ENCODE measurements at regions of chr17 and their contacts with region 1.

Region 1: DNA sequence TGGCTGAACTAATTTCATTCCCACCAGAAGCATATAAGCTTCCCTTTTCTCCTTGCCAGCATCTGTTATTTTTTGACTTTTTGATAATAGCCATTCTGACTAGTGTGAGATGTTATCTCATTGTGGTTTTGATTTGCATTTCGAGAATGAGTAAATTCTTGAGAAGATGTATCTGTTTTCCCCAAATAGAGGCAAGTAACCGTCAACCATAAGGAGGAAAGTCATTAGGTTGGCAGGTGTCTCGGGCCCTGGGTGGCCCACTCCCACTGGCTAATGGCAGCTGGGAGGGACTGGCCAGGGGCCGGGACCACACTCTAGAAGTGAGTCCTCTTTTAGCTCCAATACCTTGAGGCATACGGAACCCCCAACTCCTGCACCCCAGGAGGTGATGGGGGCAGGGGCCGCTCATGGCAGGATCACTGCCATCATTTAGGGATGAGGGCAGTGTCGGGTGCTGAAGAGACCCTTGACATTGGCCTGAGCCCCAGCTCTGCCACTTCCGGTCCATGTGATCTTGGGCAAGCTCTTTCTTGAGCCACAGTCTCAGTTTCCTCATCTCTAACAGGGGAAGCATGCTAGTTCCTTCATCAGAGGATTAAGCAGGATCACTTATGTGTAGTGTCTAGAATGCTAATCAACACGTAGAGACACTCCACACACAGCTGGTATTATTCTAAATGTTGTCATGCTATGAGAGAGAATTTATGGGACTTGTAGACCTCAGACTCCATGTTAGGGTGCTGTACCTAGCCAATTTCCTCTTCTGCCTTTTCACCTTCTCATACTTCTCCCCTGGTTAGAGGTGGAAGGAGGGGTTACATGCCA is 44.3 kb downstream of the RGS9 start:
- DNase-seq: peak; percentile 82
- H3K4me3 Mint-ChIP-seq: peak overlapping the region; percentile 16
- H3K27ac Mint-ChIP-seq: peak overlapping the region; percentile 90
- H3K4me1 Mint-ChIP-seq: peaks cover 68% of the 10 kb centered on the region
- H3K27me3 Mint-ChIP-seq: no peaks in the 10 kb centered on the region

Region 2: DNA sequence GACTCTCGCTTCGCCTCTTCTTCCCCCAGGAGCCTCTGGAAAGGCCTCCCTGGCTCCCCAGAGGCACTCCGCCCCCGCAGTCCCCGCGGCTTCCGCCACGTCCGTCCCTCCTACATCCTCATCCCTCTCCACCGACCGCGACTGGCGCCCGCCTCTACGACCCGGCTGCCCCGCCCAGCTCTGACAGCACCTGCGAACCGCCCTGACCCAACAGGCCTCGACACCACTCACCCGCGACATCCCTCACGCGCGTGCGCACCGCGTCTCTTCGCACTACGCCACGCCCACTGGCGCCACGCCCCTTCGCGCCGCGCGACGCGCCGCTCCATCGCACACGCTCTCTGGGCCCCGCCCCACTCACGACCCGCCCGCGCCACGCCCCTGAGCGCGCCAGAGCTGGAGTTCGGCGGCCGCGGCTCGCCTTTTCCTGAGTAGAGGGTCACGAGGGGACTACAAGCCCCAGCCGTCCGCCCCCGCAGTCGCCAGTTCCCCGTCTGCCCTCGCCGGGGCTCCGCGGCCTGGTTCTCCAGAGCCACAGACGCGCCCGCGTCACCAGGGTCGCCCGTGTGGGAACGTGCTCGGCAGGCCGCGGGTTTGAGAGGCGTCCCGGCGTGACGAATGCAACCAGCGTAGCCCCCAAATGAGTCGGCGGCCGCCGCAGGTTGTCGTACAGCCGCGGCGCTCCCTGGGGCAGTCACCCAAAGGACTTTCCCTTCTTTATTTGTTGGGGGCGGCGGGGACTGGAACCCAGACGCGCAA is 205.9 kb before region 1 on chr17:
- CTCF ChIA-PET with region 1: no interaction called
- POLR2A ChIA-PET with region 1: interaction called, 4 read pairs
- intact Hi-C with region 1: loop called (anchors 2 kb)
- DNase-seq: peak; percentile 97
- H3K4me3 Mint-ChIP-seq: peak overlapping the region; percentile 82
- H3K27ac Mint-ChIP-seq: peak overlapping the region; percentile 100
- H3K4me1 Mint-ChIP-seq: peaks cover 55% of the 10 kb centered on the region
- H3K27me3 Mint-ChIP-seq: no peaks in the 10 kb centered on the region

Region 3: GRCh38 chr17:65122836-65123756 is 58.4 kb before region 1 on chr17:
- CTCF ChIA-PET with region 1: interaction called, 3 read pairs
- POLR2A ChIA-PET with region 1: interaction called, 3 read pairs
- intact Hi-C with region 1: loop called (anchors 1 kb)
- DNase-seq: peak; percentile 90
- H3K4me3 Mint-ChIP-seq: peak overlapping the region; percentile 78
- H3K27ac Mint-ChIP-seq: peak overlapping the region; percentile 90
- H3K4me1 Mint-ChIP-seq: peaks cover 23% of the 10 kb centered on the region
- H3K27me3 Mint-ChIP-seq: no peaks in the 10 kb centered on the region

Region 4: GRCh38 chr17:65163990-65164495 is 17.4 kb before region 1 on chr17:
- CTCF ChIA-PET with region 1: no interaction called
- POLR2A ChIA-PET with region 1: interaction called, 4 read pairs
- intact Hi-C with region 1: loop called (anchors 1 kb)
- DNase-seq: peak; percentile 81
- H3K4me3 Mint-ChIP-seq: no peak overlapping the region
- H3K27ac Mint-ChIP-seq: peak overlapping the region; percentile 51
- H3K4me1 Mint-ChIP-seq: peaks cover 14% of the 10 kb centered on the region
- H3K27me3 Mint-ChIP-seq: no peaks in the 10 kb centered on the region

Region 5: DNA sequence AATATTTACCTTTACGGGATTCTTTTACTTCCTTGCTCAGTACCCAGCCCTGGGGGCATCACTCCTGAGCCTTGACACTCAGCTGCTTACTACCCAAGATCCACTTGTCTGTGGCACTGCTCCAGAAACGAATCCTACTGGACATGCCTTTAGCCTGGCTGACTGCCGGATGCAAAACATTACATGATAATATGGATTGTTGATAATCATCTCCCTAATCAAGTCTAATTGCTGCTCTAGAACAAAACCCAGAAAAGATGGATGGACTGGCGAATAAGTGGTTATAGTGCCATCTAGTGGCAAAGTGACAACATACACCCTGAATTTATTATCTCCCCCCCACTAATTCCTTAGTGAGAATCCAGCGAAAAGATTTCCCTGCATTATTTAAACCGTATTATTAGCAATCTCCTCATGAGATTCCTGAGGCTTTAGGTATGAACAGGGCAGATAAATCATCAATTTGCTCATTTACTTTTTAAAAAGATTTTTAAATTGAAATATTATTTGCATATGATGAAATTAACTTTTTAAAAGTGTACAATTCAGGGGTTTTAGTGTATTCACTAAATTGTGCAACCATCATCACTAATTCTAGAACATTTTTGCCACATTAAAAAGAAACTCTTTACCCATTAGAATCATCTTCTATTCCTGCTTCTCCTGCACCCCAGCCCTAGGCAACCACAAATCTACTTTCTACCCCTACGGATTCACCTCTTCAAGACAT is 17.4 kb after region 1 on chr17:
- CTCF ChIA-PET with region 1: interaction called, 23 read pairs
- POLR2A ChIA-PET with region 1: interaction called, 4 read pairs
- intact Hi-C with region 1: no loop called
- DNase-seq: no peak
- H3K4me3 Mint-ChIP-seq: no peak overlapping the region
- H3K27ac Mint-ChIP-seq: no peak overlapping the region
- H3K4me1 Mint-ChIP-seq: peaks cover 26% of the 10 kb centered on the region
- H3K27me3 Mint-ChIP-seq: peaks cover 2% of the 10 kb centered on the region

Region 6: DNA sequence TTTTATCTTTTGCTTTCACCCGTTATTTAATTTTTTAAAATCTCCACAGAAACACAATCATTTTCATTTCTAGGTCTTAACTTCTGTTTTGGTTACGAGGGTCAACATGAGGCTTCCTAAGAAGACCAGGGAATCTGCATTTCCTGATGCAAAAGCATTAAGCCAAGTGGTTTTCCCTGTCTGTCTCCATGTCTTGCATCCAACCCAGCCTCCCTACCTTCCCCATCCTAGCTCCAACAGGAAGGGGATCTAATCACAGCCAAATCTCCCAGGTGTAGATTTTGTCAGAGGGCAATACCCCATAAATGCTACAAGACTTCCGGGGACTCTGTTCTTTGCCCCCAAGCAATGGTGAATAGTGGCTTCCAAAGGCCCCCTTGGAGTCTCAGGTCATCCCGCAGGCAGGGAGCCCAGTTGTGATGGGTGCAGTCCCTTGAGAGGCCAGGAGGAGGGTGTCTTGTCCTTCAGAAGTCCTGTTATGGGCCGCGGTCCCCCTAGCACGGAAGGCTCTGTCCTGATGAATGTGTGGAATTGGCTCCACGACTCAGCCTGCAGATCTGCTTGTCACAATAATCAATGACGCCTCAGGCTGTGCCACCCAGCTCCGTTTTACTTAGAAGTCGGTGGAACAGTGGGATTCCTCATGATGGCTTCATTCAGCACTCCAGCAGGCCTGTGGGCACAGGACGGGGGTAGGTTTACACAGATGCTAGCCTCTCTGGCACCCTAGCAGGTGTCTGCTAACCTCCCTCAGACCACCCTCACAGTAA is 96.8 kb after region 1 on chr17:
- CTCF ChIA-PET with region 1: no interaction called
- POLR2A ChIA-PET with region 1: no interaction called
- intact Hi-C with region 1: no loop called
- DNase-seq: peak; percentile 34
- H3K4me3 Mint-ChIP-seq: no peak overlapping the region
- H3K27ac Mint-ChIP-seq: no peak overlapping the region
- H3K4me1 Mint-ChIP-seq: peaks cover 4% of the 10 kb centered on the region
- H3K27me3 Mint-ChIP-seq: peaks cover 13% of the 10 kb centered on the region

Measured in activated CD4-positive, alpha-beta memory T cell treated with anti-CD3 and anti-CD28 coated beads for 36 hours (primary cell).